ENCODE measurements at regions of chr4 and their contacts with region 1.

Region 1: DNA sequence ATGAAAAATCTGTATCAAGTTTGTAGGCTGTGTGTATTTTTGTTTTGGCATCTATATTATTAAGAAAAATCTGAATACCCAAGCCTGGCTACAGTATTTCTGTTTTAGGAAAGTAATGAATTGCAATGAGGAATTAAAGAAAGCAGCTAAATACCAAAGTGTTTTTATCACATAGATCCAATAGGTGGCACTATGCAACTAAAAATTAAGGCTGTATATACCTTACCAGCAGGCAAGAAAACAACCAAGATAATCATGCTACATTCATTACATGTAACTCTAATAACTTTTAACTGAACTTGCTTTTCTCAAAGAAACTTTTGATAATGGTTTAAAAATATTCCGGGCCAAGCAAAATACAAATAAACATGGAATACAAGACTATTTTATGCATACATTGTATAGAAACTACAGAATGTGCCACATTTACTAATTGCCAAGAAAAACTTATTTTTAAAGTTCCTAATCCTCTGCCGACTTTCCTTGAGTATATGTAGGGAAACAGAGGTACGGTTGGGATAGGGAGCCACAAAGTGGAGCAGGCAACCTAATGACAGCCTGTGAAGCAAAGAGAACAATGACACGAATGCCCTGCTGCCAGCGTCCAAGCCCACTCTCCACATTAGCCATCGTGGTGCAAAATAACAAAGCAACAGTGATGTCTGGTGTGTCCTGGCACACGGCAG is 63.7 kb downstream of the SEC24D start:
- DNase-seq: no peak
- H3K4me3 ChIP-seq: no peak overlapping the region
- H3K27ac ChIP-seq: peak overlapping the region in 2 of 5 donors; percentile 9 to 32
- H3K4me1 ChIP-seq: peaks cover 0 to 60% of the 10 kb centered on the region in 2 donors
- H3K27me3 ChIP-seq: no peaks in the 10 kb centered on the region
- CTCF ChIP-seq: peak; percentile 37 to 74 (median 64)
- POLR2A ChIP-seq: no peak

Region 2: DNA sequence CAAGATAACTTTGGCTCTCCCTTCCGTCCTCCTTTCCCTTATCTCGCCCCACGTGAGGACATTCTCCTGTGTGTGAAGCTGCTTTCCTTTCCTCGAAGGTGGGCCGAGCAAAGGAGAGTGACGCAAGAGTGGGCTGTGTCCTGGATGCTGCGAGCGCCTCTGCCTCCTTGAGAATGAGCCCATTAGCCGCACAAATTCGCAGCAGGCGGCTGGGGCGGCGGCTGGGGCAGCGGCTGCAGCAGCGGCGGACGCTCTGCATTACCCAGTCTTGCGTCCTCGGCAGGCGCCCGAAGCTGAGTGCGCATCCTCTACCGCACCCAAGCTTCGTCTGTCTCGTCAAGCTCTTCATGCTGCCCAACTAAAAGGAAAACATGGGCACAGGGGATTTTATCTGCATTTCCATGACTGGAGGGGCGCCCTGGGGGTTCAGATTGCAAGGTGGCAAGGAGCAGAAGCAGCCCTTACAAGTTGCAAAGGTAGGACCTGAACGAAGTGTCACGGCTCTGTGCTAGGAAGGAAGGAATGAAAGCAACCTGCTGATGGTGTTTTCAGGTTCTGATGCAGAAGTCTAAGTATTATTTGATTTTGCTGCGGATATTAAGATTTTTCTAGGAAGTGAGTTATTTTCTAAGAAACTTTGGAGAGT is 116.6 kb after region 1 on chr4 and contains the start of gene SYNPO2:
- intact Hi-C with region 1: loop called in 1 of 2 experiments (anchors 10 kb)
- DNase-seq: peak; percentile 51 to 89 (median 57)
- H3K4me3 ChIP-seq: peak within 1 kb of the TSS in 1 of 4 donors; percentile 59
- H3K27ac ChIP-seq: peak within 1 kb of the TSS in 2 of 5 donors; percentile 52 to 70
- H3K4me1 ChIP-seq: peaks cover 8% of the 10 kb centered on the region in 2 donors
- H3K27me3 ChIP-seq: no peaks in the 10 kb centered on the region
- CTCF ChIP-seq: no peak
- POLR2A ChIP-seq: peak; percentile 43 to 59
- total RNA-seq, gene SYNPO2: 4.5 to 49.0 (median 28.3) TPM